ENCODE measurements at regions of chr2 and their contacts with region 1.

Region 1: GRCh38 chr2:64063924-64064331 is 44.7 kb upstream of the VPS54 start:
- DNase-seq: no peak
- ATAC-seq: no peak
- H3K4me3 Mint-ChIP-seq: no peak overlapping the region
- H3K27ac Mint-ChIP-seq: peak overlapping the region; percentile 44
- H3K4me1 Mint-ChIP-seq: peaks cover 30% of the 10 kb centered on the region
- H3K27me3 Mint-ChIP-seq: no peaks in the 10 kb centered on the region

Region 2: DNA sequence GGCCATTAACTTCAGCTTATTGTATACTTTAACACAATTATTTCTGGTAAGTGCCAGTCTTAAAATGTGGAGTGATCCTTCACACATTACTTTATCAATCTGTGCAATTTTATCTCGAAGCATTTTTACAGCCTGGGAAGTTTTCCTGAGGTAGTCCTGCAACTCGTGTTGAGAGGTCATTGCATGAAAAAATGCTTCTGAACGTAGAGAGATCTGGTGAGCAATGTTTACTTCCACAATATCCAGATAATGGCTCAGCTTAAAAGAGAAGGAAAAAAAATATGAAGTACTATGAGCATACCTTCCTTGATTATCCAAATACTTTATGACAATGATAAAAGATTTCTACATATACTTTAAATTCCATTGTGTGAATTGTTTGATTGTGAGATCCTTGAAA is 101.7 kb before region 1 on chr2:
- CTCF ChIA-PET with region 1: no interaction called
- POLR2A ChIA-PET with region 1: no interaction called
- intact Hi-C with region 1: no loop called
- DNase-seq: no peak
- ATAC-seq: no peak
- H3K4me3 Mint-ChIP-seq: no peak overlapping the region
- H3K27ac Mint-ChIP-seq: no peak overlapping the region
- H3K4me1 Mint-ChIP-seq: no peaks in the 10 kb centered on the region
- H3K27me3 Mint-ChIP-seq: no peaks in the 10 kb centered on the region

Region 3: DNA sequence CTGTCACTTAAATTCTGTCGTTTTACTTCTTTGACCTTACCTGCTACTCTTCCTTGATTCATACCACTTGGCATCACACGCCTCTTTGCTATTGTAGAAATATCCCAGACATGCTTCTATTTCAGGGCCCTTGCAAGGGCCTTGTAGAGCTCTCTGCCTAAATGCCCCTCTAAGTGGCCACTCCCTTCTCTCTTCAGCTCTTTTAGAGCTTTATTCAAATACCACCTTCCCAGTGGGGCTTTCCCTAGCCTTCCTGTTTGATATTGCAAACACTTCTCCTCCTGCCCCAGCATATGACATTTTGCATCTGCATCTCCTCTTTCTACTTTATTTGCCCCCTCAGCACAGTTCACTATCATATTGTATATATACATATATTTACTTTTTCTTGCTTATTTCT is 26.3 kb after region 1 on chr2:
- CTCF ChIA-PET with region 1: no interaction called
- POLR2A ChIA-PET with region 1: no interaction called
- intact Hi-C with region 1: no loop called
- DNase-seq: no peak
- ATAC-seq: peak; percentile 33
- H3K4me3 Mint-ChIP-seq: no peak overlapping the region
- H3K27ac Mint-ChIP-seq: no peak overlapping the region
- H3K4me1 Mint-ChIP-seq: peaks cover 12% of the 10 kb centered on the region
- H3K27me3 Mint-ChIP-seq: no peaks in the 10 kb centered on the region

Region 4: DNA sequence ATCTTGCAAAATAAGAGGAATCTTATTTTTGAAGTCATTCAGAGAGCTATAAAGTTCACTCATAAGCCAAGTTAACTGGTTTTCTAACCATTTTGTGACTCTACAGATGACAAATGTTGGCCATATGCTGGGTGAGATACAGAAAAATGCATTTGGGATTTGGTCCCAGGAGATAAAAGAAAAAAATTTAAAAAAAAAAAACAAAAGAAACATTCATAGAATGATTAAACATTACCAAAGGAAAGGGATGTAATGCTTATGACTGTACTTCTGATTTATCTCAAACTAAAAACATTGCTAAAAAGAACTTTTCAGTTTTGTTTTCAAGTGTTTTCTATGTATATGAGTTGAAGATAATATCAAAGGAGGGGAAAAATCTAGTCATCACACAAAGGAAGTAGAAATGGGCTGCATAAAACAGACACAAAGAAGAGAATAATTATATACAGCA is 37.2 kb after region 1 on chr2:
- CTCF ChIA-PET with region 1: interaction called, 3 read pairs
- POLR2A ChIA-PET with region 1: no interaction called
- intact Hi-C with region 1: loop called in 1 of 2 experiments (anchors 2 kb)
- DNase-seq: no peak
- ATAC-seq: peak; percentile 86
- H3K4me3 Mint-ChIP-seq: peak overlapping the region; percentile 3
- H3K27ac Mint-ChIP-seq: peak overlapping the region; percentile 51
- H3K4me1 Mint-ChIP-seq: peaks cover 54% of the 10 kb centered on the region
- H3K27me3 Mint-ChIP-seq: no peaks in the 10 kb centered on the region

Measured in activated CD4-positive, alpha-beta T cell treated with anti-CD3 and anti-CD28 coated beads for 36 hours (primary cell).